AG04450 (cell line): ENCODE measurements at regions of chr9 and their contacts with region 1.

Region 1: GRCh38 chr9:26880262-26880661 is 12.3 kb downstream of the CAAP1 start:
- DNase-seq: no peak
- H3K4me3 ChIP-seq: no peak overlapping the region
- H3K27ac ChIP-seq: no peak overlapping the region
- H3K27me3 ChIP-seq: no peaks in the 10 kb centered on the region
- CTCF ChIP-seq: no peak

Region 2: DNA sequence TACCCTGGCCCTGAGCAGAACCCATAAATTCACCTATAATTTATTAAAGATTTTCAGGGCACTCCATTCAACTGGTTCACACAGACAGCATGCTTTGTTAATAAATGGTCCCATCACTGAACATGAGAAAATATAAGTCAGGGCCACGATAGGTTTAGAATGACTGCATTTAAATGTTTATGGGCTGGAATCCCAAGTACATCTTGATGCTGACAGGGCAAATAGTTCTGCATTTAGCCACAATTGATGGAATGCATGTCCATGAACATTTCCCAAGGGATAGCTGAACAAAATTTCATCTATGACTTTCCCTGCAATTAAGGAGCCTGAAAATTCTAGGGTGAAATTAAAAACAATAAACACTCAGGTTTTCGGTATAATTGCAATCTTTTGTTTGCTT is 112.1 kb before region 1 on chr9:
- CTCF ChIA-PET with region 1: no interaction called
- POLR2A ChIA-PET with region 1: interaction called, 16 read pairs
- DNase-seq: no peak
- H3K4me3 ChIP-seq: no peak overlapping the region
- H3K27ac ChIP-seq: no peak overlapping the region
- H3K27me3 ChIP-seq: no peaks in the 10 kb centered on the region
- CTCF ChIP-seq: no peak